ENCODE measurements at regions of chr13 and their contacts with region 1.

Region 1: GRCh38 chr13:97432917-97433726 is 847 bp upstream of the RAP2A start:
- DNase-seq: peak; percentile 83
- H3K4me3 ChIP-seq: peak overlapping the region; percentile 94 to 96
- H3K27ac ChIP-seq: peak overlapping the region; percentile 99 to 100
- H3K4me1 ChIP-seq: peaks cover 16 to 20% of the 10 kb centered on the region in 2 experiments; a peak in 3 of 4 replicates
- H3K27me3 ChIP-seq: no peaks in the 10 kb centered on the region
- CTCF ChIP-seq: no peak
- EP300 ChIP-seq: peak; percentile 74 to 97; a peak in 3 of 4 replicates
- RAD21 ChIP-seq: no peak

Region 2: GRCh38 chr13:97798836-97799235 is 365.7 kb after region 1 on chr13:
- CTCF ChIA-PET with region 1: interaction called, 11 read pairs
- POLR2A ChIA-PET with region 1: no interaction called
- DNase-seq: no peak
- H3K4me3 ChIP-seq: no peak overlapping the region
- H3K27ac ChIP-seq: no peak overlapping the region
- H3K4me1 ChIP-seq: no peaks in the 10 kb centered on the region
- H3K27me3 ChIP-seq: no peaks in the 10 kb centered on the region
- CTCF ChIP-seq: no peak
- EP300 ChIP-seq: no peak
- RAD21 ChIP-seq: no peak

Measured in SK-N-SH (cell line).